ENCODE measurements at regions of chr2 and their contacts with region 1.

Region 1: GRCh38 chr2:230798769-230799399 is 65.9 kb upstream of the ITM2C start:
- DNase-seq: peak; percentile 48
- H3K4me3 Mint-ChIP-seq: no peak overlapping the region
- H3K27ac Mint-ChIP-seq: peak overlapping the region; percentile 66
- H3K4me1 Mint-ChIP-seq: peaks cover 37% of the 10 kb centered on the region
- H3K27me3 Mint-ChIP-seq: no peaks in the 10 kb centered on the region

Region 2: GRCh38 chr2:230721712-230722111 is 77.2 kb before region 1 on chr2:
- CTCF ChIA-PET with region 1: interaction called, 59 read pairs
- POLR2A ChIA-PET with region 1: interaction called, 5 read pairs
- DNase-seq: no peak
- H3K4me3 Mint-ChIP-seq: peak overlapping the region; percentile 38
- H3K27ac Mint-ChIP-seq: peak overlapping the region; percentile 79
- H3K4me1 Mint-ChIP-seq: peaks cover 79% of the 10 kb centered on the region
- H3K27me3 Mint-ChIP-seq: no peaks in the 10 kb centered on the region

Region 3: DNA sequence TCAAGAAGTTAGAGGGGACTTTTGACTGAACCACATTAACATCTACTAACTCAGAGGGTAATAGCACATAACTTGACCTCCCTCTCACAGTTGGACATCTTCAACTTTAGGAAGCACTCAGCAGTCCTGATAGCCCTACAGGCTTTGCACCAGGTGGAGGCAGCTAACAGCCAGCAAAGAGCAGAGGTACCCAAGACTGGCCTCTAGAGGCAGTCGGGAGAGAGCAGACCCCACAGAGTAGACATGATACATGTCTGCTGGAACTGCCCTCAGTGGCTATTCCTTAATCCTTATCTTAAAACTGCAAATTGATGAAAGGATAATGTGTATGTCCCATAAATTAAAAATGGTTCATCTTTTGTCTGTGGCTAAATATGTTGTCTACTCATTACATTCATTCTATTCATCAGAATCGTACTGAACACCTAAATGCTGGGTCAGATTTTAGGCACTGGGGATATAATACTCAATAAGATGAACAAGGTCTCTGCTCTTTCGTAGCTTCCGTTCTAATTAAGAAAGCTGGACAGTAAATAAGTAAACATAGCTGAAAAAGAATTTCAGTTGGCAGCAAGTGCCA is 36.5 kb before region 1 on chr2:
- CTCF ChIA-PET with region 1: interaction called, 17 read pairs
- POLR2A ChIA-PET with region 1: no interaction called
- DNase-seq: peak; percentile 26
- H3K4me3 Mint-ChIP-seq: no peak overlapping the region
- H3K27ac Mint-ChIP-seq: no peak overlapping the region
- H3K4me1 Mint-ChIP-seq: peaks cover 61% of the 10 kb centered on the region
- H3K27me3 Mint-ChIP-seq: no peaks in the 10 kb centered on the region

Region 4: GRCh38 chr2:230774348-230774951 is 24.4 kb before region 1 on chr2:
- CTCF ChIA-PET with region 1: interaction called, 29 read pairs
- POLR2A ChIA-PET with region 1: interaction called, 155 read pairs
- DNase-seq: no peak
- H3K4me3 Mint-ChIP-seq: no peak overlapping the region
- H3K27ac Mint-ChIP-seq: no peak overlapping the region
- H3K4me1 Mint-ChIP-seq: peaks cover 86% of the 10 kb centered on the region
- H3K27me3 Mint-ChIP-seq: no peaks in the 10 kb centered on the region

Region 5: GRCh38 chr2:230781130-230781797 is 17.6 kb before region 1 on chr2:
- CTCF ChIA-PET with region 1: interaction called, 29 read pairs
- POLR2A ChIA-PET with region 1: interaction called, 155 read pairs
- DNase-seq: peak; percentile 77
- H3K4me3 Mint-ChIP-seq: peak overlapping the region; percentile 17
- H3K27ac Mint-ChIP-seq: peak overlapping the region; percentile 84
- H3K4me1 Mint-ChIP-seq: peaks cover 86% of the 10 kb centered on the region
- H3K27me3 Mint-ChIP-seq: no peaks in the 10 kb centered on the region

Region 6: DNA sequence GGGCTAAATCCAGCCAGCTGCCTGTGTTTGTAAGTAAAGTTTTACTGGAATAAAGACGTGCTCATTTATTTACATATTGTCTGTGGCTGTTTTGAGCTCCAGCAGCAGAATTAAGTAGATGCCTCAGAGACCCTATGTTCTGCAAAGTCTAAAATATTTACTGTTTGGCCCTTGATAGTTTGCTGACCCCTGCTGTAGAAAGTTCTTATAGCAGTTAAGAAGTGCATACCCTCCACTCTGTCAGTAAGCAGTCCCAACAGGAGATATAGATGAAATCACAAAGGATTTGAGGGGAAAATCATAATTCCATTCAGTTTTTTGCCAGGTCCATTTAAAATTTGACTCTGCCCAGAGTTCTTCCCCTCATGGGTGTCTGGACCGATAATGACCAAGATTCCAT is 15.7 kb after region 1 on chr2:
- CTCF ChIA-PET with region 1: interaction called, 18 read pairs
- POLR2A ChIA-PET with region 1: interaction called, 3 read pairs
- DNase-seq: no peak
- H3K4me3 Mint-ChIP-seq: no peak overlapping the region
- H3K27ac Mint-ChIP-seq: no peak overlapping the region
- H3K4me1 Mint-ChIP-seq: peaks cover 8% of the 10 kb centered on the region
- H3K27me3 Mint-ChIP-seq: no peaks in the 10 kb centered on the region

Region 7: DNA sequence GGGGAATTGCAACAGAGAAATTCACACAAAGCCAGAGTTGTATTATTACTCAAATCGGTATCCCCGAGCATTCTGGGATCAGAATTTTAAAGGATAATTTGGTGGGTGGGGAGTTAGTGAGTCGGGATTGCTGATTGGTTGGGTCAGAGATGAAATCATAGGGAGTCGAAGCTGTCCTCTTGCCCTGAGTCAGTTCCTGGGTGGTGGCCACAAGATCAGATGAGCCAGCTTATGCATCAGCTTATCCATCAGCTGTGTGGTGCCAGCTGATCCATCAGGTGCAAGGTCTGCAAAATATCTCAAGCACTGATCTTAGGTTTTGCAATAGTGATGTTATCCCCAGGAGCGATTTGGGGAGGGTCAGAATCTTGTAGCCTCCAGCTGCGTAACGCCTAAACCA is 31.5 kb after region 1 on chr2:
- CTCF ChIA-PET with region 1: no interaction called
- POLR2A ChIA-PET with region 1: no interaction called
- DNase-seq: no peak
- H3K4me3 Mint-ChIP-seq: no peak overlapping the region
- H3K27ac Mint-ChIP-seq: no peak overlapping the region
- H3K4me1 Mint-ChIP-seq: peaks cover 25% of the 10 kb centered on the region
- H3K27me3 Mint-ChIP-seq: peaks cover 55% of the 10 kb centered on the region

Region 8: DNA sequence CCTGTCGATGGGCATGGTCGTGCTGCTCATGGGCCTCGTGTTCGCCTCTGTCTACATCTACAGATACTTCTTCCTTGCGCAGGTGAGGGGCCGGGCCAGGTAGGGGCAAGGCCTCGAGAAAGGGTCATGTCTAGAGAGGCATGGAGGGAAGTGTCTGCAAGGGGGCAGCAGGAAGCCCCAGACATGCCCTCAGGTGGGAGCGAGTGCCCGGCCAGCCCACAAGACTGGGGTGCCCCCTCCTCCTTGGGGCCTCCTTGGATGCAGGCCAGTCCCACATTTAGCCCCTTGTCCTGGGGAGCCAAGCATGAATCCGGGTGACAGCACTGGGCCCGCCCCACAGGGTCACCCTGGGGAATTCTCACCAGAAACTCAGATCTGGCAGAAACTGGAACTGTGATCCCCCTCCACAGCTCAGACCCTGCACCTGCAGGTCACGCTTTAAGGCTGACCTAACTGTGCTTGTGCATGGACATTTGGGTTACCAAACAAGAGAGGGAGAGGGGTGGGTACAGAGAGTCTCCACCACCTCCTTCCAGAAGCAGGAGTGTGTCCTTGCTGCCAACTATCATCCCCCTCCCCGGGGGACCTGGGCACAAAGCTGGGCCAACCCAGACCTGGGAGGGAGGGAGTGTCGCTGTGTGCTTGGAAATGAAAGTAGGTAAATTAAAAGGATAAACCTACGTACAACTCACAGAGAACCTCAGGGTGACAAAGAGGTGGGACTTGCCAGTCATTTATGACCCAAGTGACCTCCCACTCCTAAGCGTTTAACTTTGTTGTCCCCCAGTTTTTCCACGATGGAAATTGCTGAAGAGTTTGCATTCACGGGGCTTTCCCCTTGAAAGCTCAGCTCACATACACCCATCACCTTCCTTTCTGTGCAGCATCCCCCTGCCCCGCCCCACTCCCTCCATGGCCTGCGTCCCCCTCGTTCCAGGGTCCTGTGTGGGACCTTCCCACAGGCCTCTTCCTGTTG is 74.9 kb after region 1 on chr2:
- CTCF ChIA-PET with region 1: no interaction called
- POLR2A ChIA-PET with region 1: no interaction called
- DNase-seq: peak; percentile 14
- H3K4me3 Mint-ChIP-seq: no peak overlapping the region
- H3K27ac Mint-ChIP-seq: no peak overlapping the region
- H3K4me1 Mint-ChIP-seq: peaks cover 33% of the 10 kb centered on the region
- H3K27me3 Mint-ChIP-seq: peaks cover 3% of the 10 kb centered on the region

Region 9: GRCh38 chr2:231138699-231139098 is 339.8 kb after region 1 on chr2:
- CTCF ChIA-PET with region 1: no interaction called
- POLR2A ChIA-PET with region 1: no interaction called
- DNase-seq: no peak
- H3K4me3 Mint-ChIP-seq: no peak overlapping the region
- H3K27ac Mint-ChIP-seq: no peak overlapping the region
- H3K4me1 Mint-ChIP-seq: no peaks in the 10 kb centered on the region
- H3K27me3 Mint-ChIP-seq: no peaks in the 10 kb centered on the region